T-cell (primary cell): ENCODE measurements at regions of chr19 and their contacts with region 1.

Region 1: DNA sequence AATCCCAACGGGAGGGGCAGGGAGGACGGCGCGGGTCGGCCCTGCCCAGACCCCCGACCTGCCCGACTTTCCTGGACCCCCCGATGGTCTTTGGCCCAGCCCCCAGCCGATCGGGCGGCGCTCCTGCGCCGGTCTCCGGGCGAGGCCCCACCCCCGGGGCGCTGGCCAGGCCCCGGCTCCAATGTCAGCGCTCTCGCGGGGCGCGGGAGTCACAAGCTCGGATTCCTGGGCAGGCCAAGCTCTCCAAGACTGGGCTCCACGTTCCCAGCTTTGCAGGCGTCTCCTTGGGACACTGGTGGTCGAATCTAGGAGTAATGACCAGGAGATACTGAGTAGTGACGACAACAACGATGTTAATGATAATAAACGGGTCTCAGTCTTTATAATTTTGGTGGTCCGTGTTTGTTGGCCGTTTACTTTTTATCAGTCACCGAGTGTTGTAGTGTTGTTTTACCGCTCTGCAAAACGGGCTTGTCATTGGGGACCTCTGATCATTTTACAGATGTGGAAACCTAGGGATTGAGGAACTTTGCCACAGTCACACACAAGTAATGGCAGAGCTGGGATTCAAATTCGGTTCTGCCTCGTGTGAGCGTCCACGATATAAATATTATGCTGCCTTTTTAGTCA is 545 bp downstream of the RAD23A start:
- DNase-seq: peak in 17 of 35 experiments; percentile 9 to 57 (median 29)
- ATAC-seq: peak; percentile 34 to 68 (median 62)
- H3K4me3 ChIP-seq: peak overlapping the region; percentile 60 to 75
- H3K4me3 Mint-ChIP-seq: peak overlapping the region; percentile 86 to 93 (median 86)
- H3K27ac ChIP-seq: peak overlapping the region; percentile 89
- H3K27ac Mint-ChIP-seq: peak overlapping the region; percentile 85 to 91
- H3K4me1 ChIP-seq: peaks cover 5 to 56% of the 10 kb centered on the region in 2 experiments
- H3K4me1 Mint-ChIP-seq: peaks cover 37 to 47% (median 46%) of the 10 kb centered on the region in 3 donors
- H3K27me3 ChIP-seq: no peaks in the 10 kb centered on the region
- H3K27me3 Mint-ChIP-seq: no peaks in the 10 kb centered on the region

Region 2: DNA sequence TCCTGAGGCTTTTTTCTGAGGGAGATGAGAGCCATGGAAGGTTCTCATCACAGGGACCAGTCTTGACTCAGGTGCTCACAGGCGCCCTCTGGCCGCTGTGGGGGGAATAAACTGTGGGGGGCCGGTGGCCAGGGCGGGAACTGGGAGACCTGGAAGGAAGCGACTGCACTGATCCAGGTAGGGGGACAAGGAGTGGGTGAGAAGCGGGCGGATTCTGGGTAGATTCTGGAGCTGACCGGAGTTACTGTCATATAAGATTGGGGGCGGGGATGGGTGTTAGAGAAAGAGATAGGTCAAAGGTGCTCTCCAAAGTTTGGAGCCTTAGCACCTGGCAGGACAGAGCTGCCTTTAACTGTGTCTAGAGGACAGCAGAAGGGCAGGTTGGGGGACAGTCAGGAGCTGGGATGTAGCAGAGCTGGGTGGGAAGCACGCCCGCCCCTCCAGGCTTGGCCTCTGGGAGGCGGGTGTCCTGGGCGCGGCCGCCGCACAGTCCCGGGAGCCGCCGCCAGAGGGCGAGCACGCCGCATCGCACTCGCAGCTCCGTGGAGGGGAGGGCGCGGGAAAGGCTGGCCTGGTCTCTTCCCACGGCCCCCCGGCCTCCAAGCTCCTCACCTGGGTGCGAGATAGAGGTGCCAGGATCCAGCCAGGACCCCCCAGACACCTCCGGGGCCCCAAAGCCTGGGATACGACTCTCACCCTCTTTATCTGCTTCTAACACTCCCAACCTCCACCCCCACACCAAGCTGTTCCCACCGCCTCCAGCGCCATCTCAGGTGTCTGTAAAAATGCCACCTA is 19.0 kb after region 1 on chr19:
- CTCF ChIA-PET with region 1: interaction called in 1 of 2 experiments, 4 read pairs
- POLR2A ChIA-PET with region 1: interaction called in 1 of 2 experiments, 11 read pairs
- DNase-seq: peak; percentile 47 to 88 (median 71)
- ATAC-seq: peak; percentile 94 to 98 (median 97)
- H3K4me3 ChIP-seq: peak overlapping the region; percentile 47 to 79
- H3K4me3 Mint-ChIP-seq: peak overlapping the region; percentile 83 to 95 (median 86)
- H3K27ac ChIP-seq: no peak overlapping the region
- H3K27ac Mint-ChIP-seq: peak overlapping the region; percentile 65 to 76
- H3K4me1 ChIP-seq: peaks cover 0 to 11% of the 10 kb centered on the region in 2 experiments
- H3K4me1 Mint-ChIP-seq: peaks cover 5 to 12% (median 6%) of the 10 kb centered on the region in 3 donors
- H3K27me3 ChIP-seq: no peaks in the 10 kb centered on the region
- H3K27me3 Mint-ChIP-seq: no peaks in the 10 kb centered on the region

Region 3: DNA sequence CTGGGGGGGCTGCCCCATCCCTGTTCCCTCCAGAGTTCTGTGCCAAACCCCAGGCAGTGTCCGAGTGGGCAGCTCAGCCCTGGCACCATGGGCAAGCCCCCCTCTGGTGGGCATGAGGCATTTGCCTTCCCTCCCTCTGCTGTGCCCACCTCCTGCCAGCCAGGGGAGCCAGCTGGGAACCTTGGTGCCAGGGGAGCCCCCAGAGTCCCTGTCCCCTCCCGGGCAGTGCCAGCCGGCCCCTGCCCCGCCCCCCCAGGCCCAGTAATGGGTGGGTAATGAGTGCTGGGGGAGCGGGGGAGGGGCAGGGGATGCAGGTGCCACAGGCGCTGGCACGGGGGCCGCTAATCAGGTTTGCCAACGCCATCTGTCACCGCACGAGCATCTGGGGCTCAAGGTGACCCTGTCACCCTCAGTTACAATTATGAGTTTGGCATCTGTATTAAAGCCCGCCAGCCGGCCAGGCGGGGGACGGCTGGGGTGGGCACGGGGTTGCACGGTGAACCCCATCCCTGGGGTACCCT is 29.1 kb after region 1 on chr19:
- CTCF ChIA-PET with region 1: no interaction called
- POLR2A ChIA-PET with region 1: no interaction called
- DNase-seq: no peak
- ATAC-seq: no peak
- H3K4me3 ChIP-seq: no peak overlapping the region
- H3K4me3 Mint-ChIP-seq: no peak overlapping the region
- H3K27ac ChIP-seq: no peak overlapping the region
- H3K27ac Mint-ChIP-seq: no peak overlapping the region
- H3K4me1 ChIP-seq: peaks cover 0 to 6% of the 10 kb centered on the region in 2 experiments
- H3K4me1 Mint-ChIP-seq: peaks cover 0 to 7% (median 3%) of the 10 kb centered on the region in 3 donors
- H3K27me3 ChIP-seq: peaks cover 0 to 41% of the 10 kb centered on the region in 2 experiments
- H3K27me3 Mint-ChIP-seq: peaks cover 13 to 14% of the 10 kb centered on the region in 2 donors